Activated naive CD4-positive, alpha-beta T cell treated with anti-CD3 and anti-CD28 coated beads for 36 hours (primary cell): ENCODE measurements at regions of chr10 and their contacts with region 1.

Region 1: GRCh38 chr10:103192451-103193106 is 493 bp downstream of the NT5C2 start:
- DNase-seq: peak; percentile 78
- H3K4me3 Mint-ChIP-seq: peak overlapping the region; percentile 87
- H3K27ac Mint-ChIP-seq: peak overlapping the region; percentile 96
- H3K4me1 Mint-ChIP-seq: peaks cover 39% of the 10 kb centered on the region
- H3K27me3 Mint-ChIP-seq: no peaks in the 10 kb centered on the region

Region 2: DNA sequence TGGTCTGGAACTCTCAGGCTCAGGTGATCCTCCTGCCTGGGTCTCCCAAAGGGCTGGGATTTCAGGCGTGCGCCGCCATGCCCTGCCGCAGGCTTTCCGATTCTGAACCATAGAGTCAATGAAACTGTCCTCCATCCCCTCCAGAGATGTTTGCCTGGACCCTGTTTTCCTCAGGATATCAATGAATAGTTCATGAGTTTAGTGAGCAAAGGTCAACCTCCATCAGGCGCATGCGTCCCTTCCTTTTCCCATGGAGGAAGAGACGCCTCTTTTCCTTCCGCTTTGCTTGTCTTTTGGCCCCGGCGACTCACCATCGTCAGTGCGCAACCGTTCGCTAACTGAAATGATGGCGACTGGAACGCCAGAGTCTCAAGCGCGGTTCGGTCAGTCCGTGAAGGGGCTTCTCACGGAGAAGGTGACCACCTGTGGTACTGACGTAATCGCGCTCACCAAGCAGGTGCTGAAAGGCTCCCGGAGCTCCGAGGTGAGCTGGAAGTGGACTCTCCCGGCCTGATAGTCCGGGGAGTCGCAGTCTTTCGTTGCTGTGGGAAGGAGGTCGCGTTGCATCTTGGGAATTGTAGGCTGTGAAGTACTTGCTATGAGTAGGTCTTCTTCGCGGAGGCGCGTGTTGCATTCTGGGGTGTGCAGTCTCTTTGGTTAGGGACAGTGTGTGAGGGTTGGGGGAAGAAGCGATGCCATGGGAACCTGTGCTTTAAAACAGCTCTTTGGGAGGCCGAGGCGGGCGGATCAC is 338.5 kb before region 1 on chr10 and contains the start of gene BORCS7:
- CTCF ChIA-PET with region 1: no interaction called
- intact Hi-C with region 1: loop called (anchors 2 kb)
- DNase-seq: peak; percentile 95
- H3K4me3 Mint-ChIP-seq: peak within 1 kb of the TSS; percentile 95
- H3K27ac Mint-ChIP-seq: peak within 1 kb of the TSS; percentile 97
- H3K4me1 Mint-ChIP-seq: peaks cover 17% of the 10 kb centered on the region
- H3K27me3 Mint-ChIP-seq: no peaks in the 10 kb centered on the region
- total RNA-seq, gene BORCS7: 5.6 to 5.8 TPM

Region 3: DNA sequence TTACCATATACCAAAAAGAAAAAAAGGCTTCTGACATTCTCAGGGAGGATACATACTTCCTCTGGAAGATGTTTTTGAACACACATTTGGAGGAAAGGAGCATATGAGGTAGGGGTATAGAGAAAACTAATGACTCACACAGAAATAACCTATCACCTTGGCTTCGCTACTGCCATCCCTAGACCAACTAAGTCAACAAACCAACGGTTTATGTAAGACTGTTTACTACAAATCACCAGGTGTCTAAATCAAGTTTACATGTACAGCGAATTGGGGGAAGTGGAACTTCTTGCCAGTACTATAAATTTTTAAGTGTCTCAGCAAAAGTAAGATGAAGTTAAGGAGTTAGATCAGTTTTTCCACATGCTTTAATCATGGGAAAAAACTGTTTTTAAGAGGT is 96.4 kb before region 1 on chr10:
- CTCF ChIA-PET with region 1: no interaction called
- intact Hi-C with region 1: no loop called
- DNase-seq: no peak
- H3K4me3 Mint-ChIP-seq: no peak overlapping the region
- H3K27ac Mint-ChIP-seq: no peak overlapping the region
- H3K4me1 Mint-ChIP-seq: peaks cover 5% of the 10 kb centered on the region
- H3K27me3 Mint-ChIP-seq: no peaks in the 10 kb centered on the region

Region 4: DNA sequence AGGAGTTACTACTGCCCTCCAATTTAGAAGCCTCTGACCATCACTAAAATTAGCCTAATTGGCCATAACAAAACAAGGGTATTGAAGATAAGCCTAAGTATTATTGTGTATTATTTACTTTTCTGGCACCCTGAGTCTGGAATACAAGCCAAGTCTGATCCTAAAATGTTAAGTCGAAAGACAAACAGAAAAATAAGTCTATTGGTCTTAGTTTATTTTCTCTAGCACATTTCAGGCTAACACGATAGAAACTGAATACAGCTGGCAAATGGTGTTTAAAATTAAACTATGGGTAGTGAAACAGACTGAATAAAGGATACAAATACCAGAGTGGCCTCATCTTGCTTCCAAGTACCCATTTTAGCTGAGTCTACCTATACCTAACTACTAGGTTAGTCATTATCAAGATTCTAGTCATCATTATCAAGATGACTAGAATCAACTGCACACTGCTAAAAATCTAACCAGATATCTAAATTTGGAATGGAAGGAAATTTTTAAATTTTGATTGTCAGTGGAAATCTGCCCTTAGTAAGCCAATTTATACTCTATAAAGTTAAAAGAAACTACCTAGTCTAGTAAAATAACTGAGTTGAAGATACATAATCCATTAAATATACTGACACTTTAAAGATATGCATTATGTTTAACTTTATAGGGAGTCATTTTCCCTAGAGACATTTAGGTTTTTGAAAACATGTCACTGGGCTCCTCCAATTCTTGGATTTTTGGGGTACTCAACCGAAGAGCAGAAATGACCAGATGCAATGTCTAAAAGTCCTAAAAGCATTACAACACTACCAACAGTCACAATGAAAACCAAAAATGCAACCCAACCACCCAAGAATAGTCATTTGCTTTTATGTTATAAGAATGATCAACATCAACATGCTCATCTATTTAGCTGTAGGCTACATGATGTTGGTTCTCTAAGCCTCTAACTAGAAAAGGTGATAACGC is 80.4 kb before region 1 on chr10:
- CTCF ChIA-PET with region 1: no interaction called
- intact Hi-C with region 1: loop called (anchors 2 kb)
- DNase-seq: no peak
- H3K4me3 Mint-ChIP-seq: no peak overlapping the region
- H3K27ac Mint-ChIP-seq: peak overlapping the region; percentile 41
- H3K4me1 Mint-ChIP-seq: peaks cover 18% of the 10 kb centered on the region
- H3K27me3 Mint-ChIP-seq: no peaks in the 10 kb centered on the region

Region 5: DNA sequence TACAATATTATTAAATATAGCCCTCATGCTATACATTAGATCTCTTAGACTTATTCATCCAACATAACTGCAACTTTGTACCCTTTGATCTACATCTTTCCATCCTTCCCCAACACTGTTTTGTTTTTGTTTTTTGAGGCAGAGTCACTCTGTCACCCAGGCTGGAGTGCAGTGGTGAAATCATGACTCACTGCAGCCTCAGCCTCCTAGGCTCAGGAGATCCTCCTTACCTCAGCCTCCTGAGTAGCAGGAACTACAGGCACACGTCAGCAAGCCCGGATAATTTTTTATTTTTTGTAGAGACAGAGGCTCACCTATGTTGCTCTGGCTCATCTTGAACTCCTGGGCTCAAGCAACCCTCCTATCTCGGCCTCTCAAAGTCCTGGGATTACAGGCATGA is 52.8 kb before region 1 on chr10:
- CTCF ChIA-PET with region 1: no interaction called
- intact Hi-C with region 1: loop called (anchors 1 kb)
- DNase-seq: peak; percentile 10
- H3K4me3 Mint-ChIP-seq: no peak overlapping the region
- H3K27ac Mint-ChIP-seq: no peak overlapping the region
- H3K4me1 Mint-ChIP-seq: peaks cover 23% of the 10 kb centered on the region
- H3K27me3 Mint-ChIP-seq: no peaks in the 10 kb centered on the region

Region 6: GRCh38 chr10:103166532-103166931 is 26.0 kb before region 1 on chr10:
- CTCF ChIA-PET with region 1: no interaction called
- intact Hi-C with region 1: no loop called
- DNase-seq: no peak
- H3K4me3 Mint-ChIP-seq: no peak overlapping the region
- H3K27ac Mint-ChIP-seq: no peak overlapping the region
- H3K4me1 Mint-ChIP-seq: peaks cover 3% of the 10 kb centered on the region
- H3K27me3 Mint-ChIP-seq: no peaks in the 10 kb centered on the region

Region 7: DNA sequence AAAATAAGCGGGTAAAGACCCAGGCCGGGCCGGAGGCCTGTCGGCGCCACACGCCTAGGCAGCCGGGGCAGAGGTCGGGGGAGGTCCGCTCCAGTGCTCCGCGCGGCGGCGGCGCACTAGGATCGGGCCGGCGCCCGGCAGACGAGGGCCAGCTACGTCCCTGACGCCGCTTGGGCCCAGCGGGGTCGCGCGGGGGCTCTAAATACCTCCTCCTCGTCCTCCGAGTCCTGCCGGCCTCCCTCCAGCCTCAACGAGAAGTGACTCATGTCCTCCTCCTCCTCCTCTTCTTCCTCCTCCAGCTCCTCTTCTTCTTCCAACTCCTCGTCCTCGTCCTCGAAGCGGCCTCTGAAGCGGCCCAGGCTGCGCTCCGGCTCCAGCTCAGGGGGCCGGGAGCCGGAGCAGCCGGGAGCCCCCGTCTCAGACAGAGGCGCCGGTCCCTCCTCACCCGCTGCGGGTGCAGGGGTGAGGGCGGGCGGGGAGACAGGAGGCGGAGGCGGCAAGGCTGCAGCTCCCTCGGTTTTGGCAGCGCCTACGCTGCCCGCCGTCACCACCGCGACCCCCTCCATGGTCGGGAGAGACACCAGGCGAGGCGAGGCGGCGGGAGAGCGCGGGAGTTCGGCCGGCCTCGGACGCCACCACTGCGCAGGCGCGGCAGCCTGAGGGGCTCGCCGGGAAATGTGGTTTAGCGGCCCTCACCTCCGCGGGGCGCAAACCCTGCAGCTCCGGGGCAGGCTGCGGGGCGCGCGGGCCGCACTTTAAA is 158.1 kb after region 1 on chr10 and contains the start of gene PCGF6:
- CTCF ChIA-PET with region 1: no interaction called
- intact Hi-C with region 1: loop called (anchors 5 kb)
- DNase-seq: peak; percentile 70
- H3K4me3 Mint-ChIP-seq: peak within 1 kb of the TSS; percentile 90
- H3K27ac Mint-ChIP-seq: peak within 1 kb of the TSS; percentile 86
- H3K4me1 Mint-ChIP-seq: peaks cover 12% of the 10 kb centered on the region
- H3K27me3 Mint-ChIP-seq: no peaks in the 10 kb centered on the region
- total RNA-seq, gene PCGF6: 10.6 to 10.7 TPM

Region 8: DNA sequence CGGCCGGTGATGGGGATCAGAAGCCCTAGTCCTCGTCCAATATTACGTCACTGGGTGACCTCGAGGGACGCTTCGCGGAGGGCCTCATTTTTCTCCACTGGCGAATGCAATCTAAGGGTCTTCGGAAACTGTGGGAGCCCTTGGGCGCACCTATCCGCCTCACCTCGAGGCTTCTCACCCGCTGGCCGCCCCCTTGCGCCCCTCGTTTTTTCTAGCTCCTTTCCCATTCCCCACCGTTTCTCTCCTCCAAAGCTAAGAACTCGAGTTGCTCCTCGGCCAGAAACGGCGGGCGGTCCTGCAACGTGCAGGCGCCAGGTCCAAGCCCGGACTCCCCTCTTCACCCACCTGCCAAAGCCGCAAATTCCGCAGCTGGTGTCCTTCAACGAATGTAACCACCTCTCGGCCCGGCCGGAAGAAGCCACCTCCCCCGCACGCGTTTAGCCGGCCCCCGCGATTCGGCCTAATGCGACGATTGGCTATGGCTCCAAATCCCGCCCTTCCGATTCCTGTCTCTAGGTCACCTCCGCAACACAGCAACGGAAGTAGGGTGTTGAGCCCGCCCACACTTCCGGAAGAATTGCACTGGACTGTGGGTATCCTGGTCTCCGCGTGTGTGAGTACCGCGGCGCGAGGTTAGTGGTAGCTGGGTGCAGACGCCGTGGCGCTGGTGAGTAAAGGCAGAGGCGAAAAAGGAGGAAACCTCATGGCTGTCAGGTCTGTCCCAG is 203.6 kb after region 1 on chr10 and contains the starts of genes ATP5MK and PDCD11:
- CTCF ChIA-PET with region 1: no interaction called
- intact Hi-C with region 1: loop called (anchors 1 kb)
- DNase-seq: peak; percentile 99
- H3K4me3 Mint-ChIP-seq: peak within 1 kb of the TSS; percentile 97
- H3K27ac Mint-ChIP-seq: peak within 1 kb of the TSS; percentile 85
- H3K4me1 Mint-ChIP-seq: peaks cover 69% of the 10 kb centered on the region
- H3K27me3 Mint-ChIP-seq: no peaks in the 10 kb centered on the region
- total RNA-seq, gene ATP5MK: 422 to 423 TPM
- total RNA-seq, gene PDCD11: 50.1 TPM

Region 9: GRCh38 chr10:103966671-103967447 is 774.3 kb after region 1 on chr10 and contains the start of gene SLK:
- CTCF ChIA-PET with region 1: no interaction called
- intact Hi-C with region 1: no loop called
- DNase-seq: peak; percentile 76
- H3K4me3 Mint-ChIP-seq: peak within 1 kb of the TSS; percentile 99
- H3K27ac Mint-ChIP-seq: peak within 1 kb of the TSS; percentile 92
- H3K4me1 Mint-ChIP-seq: peaks cover 26% of the 10 kb centered on the region
- H3K27me3 Mint-ChIP-seq: no peaks in the 10 kb centered on the region
- total RNA-seq, gene SLK: 16.0 to 16.1 TPM